PC-9 (cell line): ENCODE measurements at regions of chr1 and their contacts with region 1.

Region 1: GRCh38 chr1:200550367-200550766 is 70.2 kb downstream of the KIF14 start:
- DNase-seq: peak in 1 of 2 experiments; percentile 54
- H3K4me3 ChIP-seq: no peak overlapping the region
- H3K27ac ChIP-seq: peak overlapping the region; percentile 36; the same call in 1 of the 2 replicates
- H3K4me1 ChIP-seq: peaks cover 17% of the 10 kb centered on the region
- H3K27me3 ChIP-seq: no peaks in the 10 kb centered on the region
- CTCF ChIP-seq: no peak

Region 2: GRCh38 chr1:200959411-200959921 is 409.1 kb after region 1 on chr1:
- CTCF ChIA-PET with region 1: no interaction called
- POLR2A ChIA-PET with region 1: interaction called, 11 read pairs
- intact Hi-C with region 1: no loop called
- DNase-seq: no peak
- H3K4me3 ChIP-seq: no peak overlapping the region
- H3K27ac ChIP-seq: no peak overlapping the region
- H3K4me1 ChIP-seq: no peaks in the 10 kb centered on the region
- H3K27me3 ChIP-seq: no peaks in the 10 kb centered on the region
- CTCF ChIP-seq: no peak